ENCODE measurements at regions of chr7 and their contacts with region 1.

Region 1: GRCh38 chr7:100837099-100837836 is 9.9 kb upstream of the EPHB4 start:
- DNase-seq: peak; percentile 91
- H3K4me3 Mint-ChIP-seq: peak overlapping the region; percentile 76
- H3K27ac Mint-ChIP-seq: peak overlapping the region; percentile 67
- H3K4me1 Mint-ChIP-seq: peaks cover 4% of the 10 kb centered on the region
- H3K27me3 Mint-ChIP-seq: peaks cover 3% of the 10 kb centered on the region

Region 2: DNA sequence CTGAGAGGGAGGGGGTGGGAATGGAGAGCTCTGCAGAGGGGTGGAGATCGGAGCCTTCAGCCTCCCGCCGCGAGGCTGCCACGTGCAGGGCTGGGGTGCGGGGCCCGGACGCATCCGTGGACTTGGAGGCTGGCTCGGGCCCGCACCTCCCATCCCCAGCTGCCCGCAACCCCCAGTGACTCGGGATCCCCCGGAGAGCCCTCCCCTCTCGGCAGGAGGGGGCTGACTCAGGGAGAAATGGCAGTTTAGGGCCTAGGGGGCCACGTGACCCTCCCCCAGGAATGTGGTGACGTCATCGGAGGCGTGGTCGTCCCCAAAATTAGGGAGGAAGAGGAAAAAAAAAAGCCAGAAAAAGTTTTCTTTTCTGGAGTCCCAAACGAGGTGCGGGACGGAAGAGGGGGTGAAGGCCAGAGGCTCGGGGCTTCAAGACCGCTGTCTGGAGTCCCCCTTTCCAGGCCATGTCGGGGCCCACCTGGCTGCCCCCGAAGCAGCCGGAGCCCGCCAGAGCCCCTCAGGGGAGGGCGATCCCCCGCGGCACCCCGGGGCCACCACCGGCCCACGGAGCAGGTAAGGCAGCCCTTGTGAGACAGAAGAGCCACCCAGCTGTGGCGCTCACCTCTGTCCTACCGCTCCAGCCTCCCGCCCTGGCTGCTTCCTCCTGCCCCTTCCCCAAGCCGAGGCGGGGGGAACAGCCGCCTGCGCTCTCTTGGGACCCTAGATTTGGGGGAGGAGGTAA is 29.9 kb after region 1 on chr7 and contains the start of gene TRIP6:
- intact Hi-C with region 1: loop called (anchors 2 kb)
- DNase-seq: peak; percentile 89
- H3K4me3 Mint-ChIP-seq: peak within 1 kb of the TSS; percentile 99
- H3K27ac Mint-ChIP-seq: peak within 1 kb of the TSS; percentile 98
- H3K4me1 Mint-ChIP-seq: peaks cover 12% of the 10 kb centered on the region
- H3K27me3 Mint-ChIP-seq: no peaks in the 10 kb centered on the region
- total RNA-seq, gene TRIP6: 42.7 and 47.6 TPM in 2 replicates